BJ (cell line): ENCODE measurements at regions of chr18 and their contacts with region 1.

Region 1: DNA sequence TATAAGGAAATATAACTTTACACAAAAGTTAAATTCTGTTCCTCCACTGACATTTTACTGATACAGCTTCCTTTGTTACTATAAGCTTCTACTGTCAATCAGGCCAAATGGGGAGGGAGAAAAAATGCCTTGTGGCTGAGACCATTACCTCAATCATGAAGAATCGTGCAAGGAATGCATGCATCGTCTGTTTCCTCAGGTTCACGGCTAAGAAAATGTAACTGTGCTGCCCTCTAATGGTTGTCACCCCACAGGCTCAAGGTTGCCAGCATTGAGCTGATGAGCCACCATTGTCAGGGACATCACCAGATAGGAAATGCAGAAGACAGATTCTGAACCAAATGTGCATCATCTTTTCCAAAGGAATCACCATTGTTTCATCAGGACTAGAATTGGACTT is 426.9 kb downstream of the CDH2 start:
- DNase-seq: no peak
- H3K4me3 ChIP-seq: no peak overlapping the region
- H3K27me3 ChIP-seq: no peaks in the 10 kb centered on the region; the same call in none of the 2 replicates
- CTCF ChIP-seq: peak; percentile 53

Region 2: DNA sequence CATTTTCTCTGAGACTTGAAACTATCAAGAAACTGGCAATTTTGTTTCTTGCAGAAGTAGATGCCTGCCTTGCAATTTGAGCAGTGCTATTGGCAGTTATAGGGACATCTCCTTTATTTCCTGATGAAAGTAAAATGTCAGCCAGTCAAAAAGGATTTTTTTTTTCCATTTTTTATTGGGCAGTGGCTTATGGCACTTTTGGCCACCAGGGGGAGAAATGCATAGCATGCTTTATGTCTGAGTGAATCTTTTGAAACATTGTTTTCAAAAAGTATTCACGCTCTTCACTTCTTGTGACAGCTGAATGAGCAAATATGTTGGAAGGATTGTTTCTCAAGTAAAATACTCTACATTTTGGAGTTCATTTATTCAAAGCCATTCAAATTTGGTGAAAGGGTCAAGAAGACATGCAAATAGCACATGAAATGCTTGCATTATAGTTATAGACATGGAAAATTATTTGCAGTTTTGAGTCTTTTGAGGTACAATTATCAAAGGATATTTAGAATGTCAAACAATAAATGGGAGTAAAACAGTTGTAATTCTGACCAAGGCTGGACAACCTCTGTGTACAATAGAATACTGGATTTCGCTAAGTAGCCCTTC is 64.1 kb before region 1 on chr18:
- CTCF ChIA-PET with region 1: interaction called, 17 read pairs
- POLR2A ChIA-PET with region 1: no interaction called
- DNase-seq: no peak
- H3K4me3 ChIP-seq: no peak overlapping the region
- H3K27me3 ChIP-seq: 0 out of 2 replicates have a peak, but pooled peaks cover 1% of the 10 kb centered on the region
- CTCF ChIP-seq: peak; percentile 77

Region 3: GRCh38 chr18:27762054-27762453 is 12.0 kb after region 1 on chr18:
- CTCF ChIA-PET with region 1: interaction called, 11 read pairs
- POLR2A ChIA-PET with region 1: no interaction called
- DNase-seq: no peak
- H3K4me3 ChIP-seq: no peak overlapping the region
- H3K27me3 ChIP-seq: no peaks in the 10 kb centered on the region
- CTCF ChIP-seq: no peak